Heart left ventricle (tissue), 16 donors: ENCODE measurements at regions of chr1 and their contacts with region 1.

Region 1: GRCh38 chr1:198829944-198830343 is 191.1 kb downstream of the PTPRC start:
- DNase-seq: no peak
- ATAC-seq: no peak
- H3K4me3 ChIP-seq: no peak overlapping the region
- H3K27ac ChIP-seq: no peak overlapping the region
- H3K4me1 ChIP-seq: no peaks in the 10 kb centered on the region
- H3K27me3 ChIP-seq: no peaks in the 10 kb centered on the region
- CTCF ChIP-seq: no peak
- POLR2A ChIP-seq: no peak

Region 2: DNA sequence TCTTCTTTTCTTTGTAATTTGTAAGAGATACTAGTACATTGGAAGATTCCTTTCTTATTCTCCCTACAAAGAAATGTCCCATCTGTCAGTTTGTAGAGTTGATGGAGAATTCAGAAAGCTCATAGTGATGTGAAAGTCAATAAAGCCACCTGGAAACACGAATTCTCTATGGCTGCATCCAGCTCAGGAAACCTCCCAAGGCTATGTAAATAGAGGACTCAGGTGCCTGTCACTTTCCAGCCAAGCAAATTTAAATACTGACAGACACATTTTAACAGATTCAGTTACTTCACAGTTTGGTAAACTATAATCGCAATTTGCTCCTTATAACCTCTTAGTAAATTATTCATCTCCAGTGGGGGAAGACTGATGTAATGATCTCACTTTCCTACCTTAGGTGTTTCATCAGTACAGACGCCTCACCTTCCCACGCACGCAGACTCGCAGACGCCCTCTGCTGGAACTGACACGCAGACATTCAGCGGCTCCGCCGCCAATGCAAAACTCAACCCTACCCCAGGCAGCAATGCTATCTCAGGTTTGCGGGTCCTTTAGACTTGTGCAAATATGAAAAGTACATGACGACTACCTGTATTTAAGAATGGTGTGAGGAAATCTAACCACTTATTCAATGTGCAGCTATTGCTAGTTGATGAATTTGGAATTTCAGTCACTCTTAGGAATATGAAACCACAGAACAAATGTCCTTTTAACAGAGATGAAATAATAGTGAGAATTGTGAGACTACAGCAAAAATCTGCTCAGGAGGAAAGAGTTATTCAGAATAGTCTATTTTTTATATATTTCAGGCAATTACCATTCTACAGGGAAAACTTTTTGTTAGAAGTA is 130.6 kb before region 1 on chr1:
- intact Hi-C with region 1: no loop called
- DNase-seq: peak in 3 of 5 donors; percentile 21 to 70 (median 36)
- ATAC-seq: peak in 2 of 4 donors; percentile 50 to 63
- H3K4me3 ChIP-seq: no peak overlapping the region
- H3K27ac ChIP-seq: no peak overlapping the region
- H3K4me1 ChIP-seq: peaks cover 0 to 40% (median 0%) of the 10 kb centered on the region in 12 donors
- H3K27me3 ChIP-seq: peaks cover 0 to 29% (median 0%) of the 10 kb centered on the region in 9 donors
- CTCF ChIP-seq: peak; percentile 33 to 66 (median 52)
- POLR2A ChIP-seq: no peak

Region 3: DNA sequence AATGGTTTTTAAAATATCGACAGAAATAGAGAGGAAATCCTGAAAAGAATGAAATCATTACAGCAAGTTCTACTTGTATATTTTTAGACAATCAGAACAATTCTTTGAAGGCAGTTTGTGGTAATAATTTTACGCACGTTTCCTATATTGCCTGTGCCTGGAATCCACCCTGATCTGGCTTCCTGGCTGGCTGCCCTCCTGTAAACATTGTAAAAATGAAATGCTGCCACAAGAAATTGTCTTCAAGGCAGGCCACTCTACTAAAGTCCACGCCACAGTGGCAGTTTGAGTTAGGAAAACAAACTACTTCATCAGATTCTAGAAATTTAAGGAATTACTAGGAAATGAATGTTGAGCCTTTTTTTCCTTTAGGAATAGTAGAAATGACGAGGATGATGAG is 743.1 kb after region 1 on chr1:
- intact Hi-C with region 1: loop called in 1 of 10 experiments (anchors 5 kb)
- DNase-seq: peak in 2 of 5 donors; percentile 27 to 29
- ATAC-seq: no peak
- H3K4me3 ChIP-seq: no peak overlapping the region
- H3K27ac ChIP-seq: no peak overlapping the region
- H3K4me1 ChIP-seq: no peaks in the 10 kb centered on the region
- H3K27me3 ChIP-seq: no peaks in the 10 kb centered on the region
- CTCF ChIP-seq: no peak
- POLR2A ChIP-seq: no peak